Mammary epithelial cell (primary cell): ENCODE measurements at regions of chr1 and their contacts with region 1.

Region 1: DNA sequence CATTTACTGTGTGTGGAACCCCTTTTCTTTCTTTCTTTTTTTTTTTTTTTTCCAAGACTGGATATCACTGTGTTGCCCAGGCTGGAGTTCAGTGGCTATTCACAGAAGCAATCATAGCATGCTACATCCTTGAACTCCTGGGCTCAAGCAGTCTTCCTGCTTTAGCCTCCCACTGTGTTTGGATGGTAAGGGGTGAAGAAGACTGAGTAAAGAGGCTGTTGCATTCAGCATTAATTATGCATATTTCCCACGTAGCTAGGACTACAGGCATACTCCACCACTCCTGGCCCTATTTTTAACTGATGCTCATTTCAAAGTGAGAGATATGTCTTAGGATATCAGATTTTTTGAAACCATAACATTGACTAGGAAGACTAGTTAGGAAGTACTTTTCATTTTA is 39.5 kb downstream of the PHACTR4 start:
- DNase-seq: no peak
- H3K4me3 ChIP-seq: no peak overlapping the region
- H3K27ac ChIP-seq: no peak overlapping the region
- H3K4me1 ChIP-seq: no peaks in the 10 kb centered on the region
- H3K27me3 ChIP-seq: no peaks in the 10 kb centered on the region
- CTCF ChIP-seq: no peak

Region 2: GRCh38 chr1:28449904-28450303 is 40.8 kb after region 1 on chr1:
- CTCF ChIA-PET with region 1: no interaction called
- dilution Hi-C with region 1: no loop called
- in situ Hi-C with region 1: no loop called
- intact Hi-C with region 1: loop called (anchors 1 kb)
- DNase-seq: peak; percentile 96
- H3K4me3 ChIP-seq: no peak overlapping the region
- H3K27ac ChIP-seq: peak overlapping the region; percentile 75
- H3K4me1 ChIP-seq: peaks cover 24% of the 10 kb centered on the region
- H3K27me3 ChIP-seq: no peaks in the 10 kb centered on the region
- CTCF ChIP-seq: no peak

Region 3: GRCh38 chr1:28470146-28470545 is 61.1 kb after region 1 on chr1:
- CTCF ChIA-PET with region 1: no interaction called
- dilution Hi-C with region 1: no loop called
- in situ Hi-C with region 1: no loop called
- intact Hi-C with region 1: loop called (anchors 1 kb)
- DNase-seq: no peak
- H3K4me3 ChIP-seq: no peak overlapping the region
- H3K27ac ChIP-seq: no peak overlapping the region
- H3K4me1 ChIP-seq: no peaks in the 10 kb centered on the region
- H3K27me3 ChIP-seq: no peaks in the 10 kb centered on the region
- CTCF ChIP-seq: no peak